ENCODE measurements at regions of chr6 and their contacts with region 1.

Region 1: DNA sequence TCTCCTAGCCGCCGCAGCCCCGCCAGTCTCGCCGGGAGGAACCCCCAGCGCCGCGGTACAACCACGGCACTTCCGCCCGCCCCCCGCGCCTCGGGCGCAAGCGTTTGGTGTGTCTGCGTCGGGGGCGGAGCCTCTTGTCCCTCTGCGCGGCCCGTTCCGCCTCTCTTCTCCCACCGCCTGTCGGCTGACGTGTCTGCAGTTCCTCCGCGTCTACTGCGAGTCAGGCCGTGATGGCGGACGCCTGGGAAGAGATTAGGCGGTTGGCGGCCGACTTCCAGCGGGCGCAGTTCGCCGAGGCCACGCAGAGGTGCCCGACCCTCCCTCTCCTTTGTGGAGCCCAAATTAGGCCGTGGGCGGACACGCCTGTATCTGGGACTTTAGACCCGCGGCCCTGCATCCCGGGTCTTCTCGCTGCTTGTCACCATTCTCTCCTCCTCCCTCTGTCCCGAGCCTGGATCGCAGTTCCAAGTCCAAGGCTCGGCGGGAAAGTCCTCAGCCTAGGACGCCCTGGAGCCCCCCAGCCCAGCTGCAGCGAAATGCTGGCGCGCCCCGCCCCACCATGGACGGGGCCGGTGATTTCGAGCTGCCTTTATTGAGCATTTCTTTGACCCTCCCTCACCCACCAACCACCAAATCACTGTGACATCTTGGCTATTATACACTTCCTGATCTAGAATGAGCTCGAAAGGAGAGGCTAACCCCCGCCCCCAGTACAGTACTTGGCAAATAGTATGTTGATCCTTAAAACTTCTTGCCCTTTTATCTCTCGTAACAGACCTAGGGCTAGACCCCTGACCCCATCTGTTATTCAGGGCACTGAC is at the start of gene UFL1:
- DNase-seq: peak; percentile 96
- ATAC-seq: peak; percentile 98
- H3K4me3 Mint-ChIP-seq: peak within 1 kb of the TSS; percentile 98
- H3K27ac Mint-ChIP-seq: peak within 1 kb of the TSS; percentile 99
- H3K4me1 Mint-ChIP-seq: peaks cover 16% of the 10 kb centered on the region
- H3K27me3 Mint-ChIP-seq: no peaks in the 10 kb centered on the region
- total RNA-seq, gene UFL1: 27.3 to 28.0 TPM

Region 2: DNA sequence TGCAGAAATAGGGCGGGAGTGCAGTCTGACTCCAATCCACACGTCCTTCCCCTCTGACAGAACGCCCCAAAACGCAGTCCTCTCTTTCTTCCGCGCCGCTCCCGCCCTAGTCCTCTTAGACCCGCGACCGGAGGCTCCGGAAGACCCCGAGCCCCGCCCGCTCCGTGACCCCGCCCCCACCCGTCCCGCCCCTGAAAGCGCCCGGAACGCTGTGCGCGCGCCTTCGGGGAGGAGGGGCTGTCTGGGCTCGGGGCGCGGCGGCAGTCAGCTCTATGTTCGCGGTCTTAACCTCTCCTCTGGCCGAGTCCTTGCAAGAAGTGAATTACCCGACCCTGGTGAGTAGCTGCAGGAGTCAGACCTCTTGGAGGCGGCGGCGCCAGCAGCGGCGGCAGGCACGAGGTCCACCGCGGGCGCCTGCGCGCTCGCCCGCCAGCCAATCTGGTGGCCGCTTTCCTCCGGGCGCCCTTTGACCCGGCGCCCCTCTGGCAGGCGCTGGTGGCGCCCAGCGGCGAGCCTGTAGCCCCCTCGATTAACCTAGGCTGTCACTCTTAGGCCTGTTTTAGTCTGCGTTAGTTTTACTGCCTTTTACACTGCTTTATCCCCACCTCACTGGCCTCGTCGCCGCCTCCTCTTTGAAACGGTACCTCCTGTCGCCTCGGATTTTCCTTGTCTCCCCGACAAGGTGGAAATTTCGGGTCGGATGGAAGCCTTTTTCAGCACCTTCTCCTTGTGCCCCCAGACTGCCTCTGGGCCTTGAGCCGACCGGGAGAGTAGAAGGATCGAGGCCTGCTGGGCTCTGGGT is 944.3 kb before region 1 on chr6 and contains the start of gene MANEA:
- CTCF ChIA-PET with region 1: no interaction called
- POLR2A ChIA-PET with region 1: no interaction called
- intact Hi-C with region 1: loop called (anchors 1 to 2 kb)
- DNase-seq: peak; percentile 92
- ATAC-seq: peak; percentile 92
- H3K4me3 Mint-ChIP-seq: peak within 1 kb of the TSS; percentile 81
- H3K27ac Mint-ChIP-seq: peak within 1 kb of the TSS; percentile 98
- H3K4me1 Mint-ChIP-seq: peaks cover 31% of the 10 kb centered on the region
- H3K27me3 Mint-ChIP-seq: no peaks in the 10 kb centered on the region
- total RNA-seq, gene MANEA: 19.6 to 22.4 TPM

Region 3: DNA sequence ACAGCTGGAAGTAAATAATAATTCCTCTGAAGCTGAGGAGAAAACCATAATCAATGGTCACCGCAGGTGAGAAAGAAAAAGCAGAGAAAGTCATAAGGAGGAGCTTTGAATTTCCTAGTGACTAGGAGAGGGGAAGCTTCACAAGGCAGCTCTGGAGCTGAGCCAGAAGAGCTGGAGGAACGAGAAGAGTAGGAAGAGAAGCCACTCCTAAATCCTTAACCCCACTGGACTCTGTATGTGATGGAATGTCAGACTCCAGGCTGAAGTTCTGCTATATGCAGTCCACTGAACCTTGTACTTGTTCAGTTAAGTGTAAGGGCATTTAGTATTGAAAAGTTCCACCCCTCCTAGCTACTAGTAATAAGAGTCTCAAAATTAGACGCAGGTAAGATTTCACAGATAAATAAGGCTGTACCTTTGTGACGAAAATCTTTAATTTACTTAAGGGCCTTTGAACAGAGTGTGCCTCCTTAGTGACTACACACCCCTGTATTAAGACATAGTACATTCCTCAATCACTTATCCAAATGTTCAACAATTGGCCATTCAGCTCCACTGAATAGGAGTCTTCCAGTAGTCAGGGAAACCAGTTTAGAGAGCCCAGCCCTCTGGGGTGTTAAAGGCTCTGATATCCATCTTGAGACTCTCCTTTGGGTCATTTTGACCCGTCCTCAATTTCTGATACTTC is 71.6 kb before region 1 on chr6:
- CTCF ChIA-PET with region 1: no interaction called
- POLR2A ChIA-PET with region 1: no interaction called
- intact Hi-C with region 1: no loop called
- DNase-seq: no peak
- ATAC-seq: no peak
- H3K4me3 Mint-ChIP-seq: no peak overlapping the region
- H3K27ac Mint-ChIP-seq: no peak overlapping the region
- H3K4me1 Mint-ChIP-seq: no peaks in the 10 kb centered on the region
- H3K27me3 Mint-ChIP-seq: no peaks in the 10 kb centered on the region

Region 4: DNA sequence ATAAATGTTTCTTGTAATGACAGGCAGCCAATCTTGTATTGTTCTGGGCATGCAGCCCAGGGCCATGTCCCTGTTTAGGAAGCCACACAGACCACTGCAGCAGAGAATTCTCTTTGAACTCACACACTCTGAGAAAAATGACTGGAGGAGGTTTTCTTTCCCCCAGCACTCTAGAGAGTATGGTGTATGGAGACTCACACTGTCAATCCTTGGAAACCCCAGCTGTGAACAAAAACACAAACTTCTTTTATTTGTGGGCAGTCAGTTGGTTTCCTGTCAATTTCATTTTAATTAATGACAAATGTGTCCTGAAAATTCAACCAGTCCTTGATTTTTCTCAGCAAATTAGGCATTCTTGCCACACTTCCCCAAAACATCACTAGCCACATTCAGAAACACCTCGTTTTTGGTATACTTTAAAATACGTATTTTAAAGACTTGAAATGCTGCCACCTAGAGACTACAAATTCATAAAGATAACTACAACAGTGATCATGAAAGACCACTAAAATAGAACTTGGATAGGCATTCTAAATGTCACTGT is 53.1 kb before region 1 on chr6:
- CTCF ChIA-PET with region 1: no interaction called
- POLR2A ChIA-PET with region 1: no interaction called
- intact Hi-C with region 1: loop called in 1 of 2 experiments (anchors 2 kb)
- DNase-seq: no peak
- ATAC-seq: no peak
- H3K4me3 Mint-ChIP-seq: no peak overlapping the region
- H3K27ac Mint-ChIP-seq: no peak overlapping the region
- H3K4me1 Mint-ChIP-seq: peaks cover 26% of the 10 kb centered on the region
- H3K27me3 Mint-ChIP-seq: peaks cover 8% of the 10 kb centered on the region

Region 5: GRCh38 chr6:96571551-96571950 is 49.7 kb after region 1 on chr6:
- CTCF ChIA-PET with region 1: no interaction called
- POLR2A ChIA-PET with region 1: no interaction called
- intact Hi-C with region 1: no loop called
- DNase-seq: no peak
- ATAC-seq: no peak
- H3K4me3 Mint-ChIP-seq: no peak overlapping the region
- H3K27ac Mint-ChIP-seq: no peak overlapping the region
- H3K4me1 Mint-ChIP-seq: no peaks in the 10 kb centered on the region
- H3K27me3 Mint-ChIP-seq: peaks cover 11% of the 10 kb centered on the region

Region 6: GRCh38 chr6:96837081-96837971 is 315.5 kb after region 1 on chr6 and contains the start of gene GPR63:
- CTCF ChIA-PET with region 1: no interaction called
- POLR2A ChIA-PET with region 1: no interaction called
- intact Hi-C with region 1: loop called (anchors 1 to 5 kb)
- DNase-seq: peak; percentile 88
- ATAC-seq: peak; percentile 99
- H3K4me3 Mint-ChIP-seq: peak within 1 kb of the TSS; percentile 86
- H3K27ac Mint-ChIP-seq: peak within 1 kb of the TSS; percentile 65
- H3K4me1 Mint-ChIP-seq: peaks cover 17% of the 10 kb centered on the region
- H3K27me3 Mint-ChIP-seq: peaks cover 32% of the 10 kb centered on the region
- total RNA-seq, gene GPR63: 1.2 to 1.3 TPM

Region 7: GRCh38 chr6:96923871-96924493 is 402.1 kb after region 1 on chr6:
- CTCF ChIA-PET with region 1: no interaction called
- POLR2A ChIA-PET with region 1: no interaction called
- intact Hi-C with region 1: loop called in 1 of 2 experiments (anchors 1 kb)
- DNase-seq: no peak
- ATAC-seq: peak; percentile 62
- H3K4me3 Mint-ChIP-seq: peak overlapping the region; percentile 88
- H3K27ac Mint-ChIP-seq: peak overlapping the region; percentile 81
- H3K4me1 Mint-ChIP-seq: peaks cover 28% of the 10 kb centered on the region
- H3K27me3 Mint-ChIP-seq: no peaks in the 10 kb centered on the region

Region 8: GRCh38 chr6:97053643-97054411 is 532.0 kb after region 1 on chr6:
- CTCF ChIA-PET with region 1: no interaction called
- POLR2A ChIA-PET with region 1: no interaction called
- intact Hi-C with region 1: loop called in 1 of 2 experiments (anchors 1 kb)
- DNase-seq: no peak
- ATAC-seq: no peak
- H3K4me3 Mint-ChIP-seq: no peak overlapping the region
- H3K27ac Mint-ChIP-seq: no peak overlapping the region
- H3K4me1 Mint-ChIP-seq: peaks cover 15% of the 10 kb centered on the region
- H3K27me3 Mint-ChIP-seq: no peaks in the 10 kb centered on the region